Left ventricle myocardium superior (tissue), 1 donor: ENCODE measurements at regions of chr7 and their contacts with region 1.

Region 1: GRCh38 chr7:47669061-47669891 is 87.4 kb upstream of the TNS3 start:
- DNase-seq: peak; percentile 63
- ATAC-seq: peak; percentile 91

Region 2: GRCh38 chr7:47725031-47725780 is 55.9 kb after region 1 on chr7:
- intact Hi-C with region 1: loop called (anchors 5 kb)
- DNase-seq: no peak
- ATAC-seq: no peak